GM13977 (cell line): ENCODE measurements at regions of chr3 and their contacts with region 1.

Region 1: GRCh38 chr3:55485211-55485791 is 1.8 kb downstream of the WNT5A start:
- DNase-seq: peak; percentile 91
- CTCF ChIP-seq: peak; percentile 76

Region 2: GRCh38 chr3:54939557-54940300 is 545.6 kb before region 1 on chr3:
- in situ Hi-C with region 1: no loop called
- DNase-seq: no peak
- CTCF ChIP-seq: no peak

Region 3: DNA sequence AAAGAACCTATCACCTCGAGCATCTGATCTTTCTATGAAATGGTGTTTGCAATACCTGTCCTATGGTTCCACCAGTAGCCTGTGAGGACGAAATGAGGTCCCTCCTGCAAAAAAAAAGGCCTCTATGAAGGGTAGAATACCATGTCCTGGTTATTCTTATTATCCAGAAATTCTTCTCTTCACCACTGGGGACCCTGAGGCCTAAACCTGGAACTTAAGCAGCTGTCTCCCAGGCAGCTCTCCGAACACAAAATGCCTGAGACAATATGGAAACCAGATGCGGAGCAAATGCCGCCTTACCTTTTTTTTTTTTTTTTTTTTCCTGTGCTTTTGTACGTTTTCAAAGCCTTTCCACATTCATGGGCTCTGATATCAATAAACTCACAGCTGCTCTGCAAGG is 63.9 kb after region 1 on chr3:
- in situ Hi-C with region 1: no loop called
- DNase-seq: no peak
- CTCF ChIP-seq: no peak

Region 4: DNA sequence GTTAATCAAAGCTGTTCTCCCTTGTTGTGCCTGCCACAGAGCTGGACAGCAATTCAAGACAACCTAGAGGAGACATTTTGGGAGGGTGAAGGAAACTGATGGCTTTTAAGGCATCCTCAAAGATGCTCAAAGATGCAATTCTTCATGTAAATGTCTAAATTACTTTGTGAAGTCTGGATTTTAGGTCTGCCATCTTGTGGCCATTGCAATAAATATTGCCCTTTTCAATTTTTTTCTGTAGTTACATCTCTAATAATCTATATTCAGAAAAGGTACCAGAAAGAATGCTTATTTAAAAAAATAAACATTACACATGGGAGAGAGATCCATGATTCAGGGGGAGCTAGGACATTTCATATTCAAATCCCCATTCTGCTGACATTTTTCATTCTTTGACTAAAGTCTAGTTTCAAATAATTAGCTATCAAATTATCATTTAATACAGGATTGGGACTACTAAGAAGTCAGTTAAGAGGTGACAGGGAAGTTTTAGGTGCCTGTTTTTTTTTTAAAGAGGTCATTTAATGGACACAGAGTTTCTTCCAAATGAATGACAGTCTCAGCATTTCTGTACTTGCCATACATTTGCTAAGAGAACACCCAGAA is 261.6 kb after region 1 on chr3:
- in situ Hi-C with region 1: loop called (anchors 10 kb)
- DNase-seq: peak; percentile 10
- CTCF ChIP-seq: peak; percentile 41